ENCODE measurements at regions of chr7 and their contacts with region 1.

Region 1: DNA sequence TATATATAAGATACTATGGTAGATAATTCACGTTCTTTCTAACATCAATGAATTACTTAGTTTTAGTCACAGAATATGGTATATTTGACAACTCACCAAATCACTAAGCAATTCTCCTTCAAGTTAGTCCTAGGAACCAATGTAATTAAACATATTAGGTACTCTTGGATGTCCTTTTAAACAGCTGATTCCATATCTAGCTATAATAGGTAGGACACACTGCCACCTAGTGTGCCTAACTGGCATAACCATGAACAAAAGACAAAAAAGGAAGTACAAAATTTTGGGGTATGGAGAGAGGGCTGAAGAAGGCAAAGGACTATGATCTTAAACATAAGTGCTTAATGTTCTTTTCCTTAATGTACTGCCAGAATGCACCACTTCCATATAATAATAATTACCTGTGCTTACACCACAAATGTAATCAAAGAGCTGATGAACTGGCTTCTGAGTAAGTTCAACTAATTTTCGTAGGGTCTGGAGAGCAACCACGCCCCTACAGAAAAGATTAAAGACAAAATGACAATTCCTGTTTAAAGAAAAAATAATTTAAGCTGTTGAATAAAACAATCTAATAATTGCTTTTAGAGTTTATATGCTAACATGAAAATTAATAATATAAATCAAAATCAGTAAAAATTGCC is 28.7 kb downstream of the PNPLA8 start:
- DNase-seq: peak; percentile 40
- ATAC-seq: peak; percentile 63
- H3K4me3 ChIP-seq: no peak overlapping the region
- H3K27ac ChIP-seq: no peak overlapping the region
- H3K4me1 ChIP-seq: no peaks in the 10 kb centered on the region
- H3K27me3 ChIP-seq: no peaks in the 10 kb centered on the region
- CTCF ChIP-seq: peak; percentile 55 to 88 (median 66); a peak in 5 of 6 replicates
- POLR2A ChIP-seq: no peak
- RAD21 ChIP-seq: peak; percentile 76

Region 2: DNA sequence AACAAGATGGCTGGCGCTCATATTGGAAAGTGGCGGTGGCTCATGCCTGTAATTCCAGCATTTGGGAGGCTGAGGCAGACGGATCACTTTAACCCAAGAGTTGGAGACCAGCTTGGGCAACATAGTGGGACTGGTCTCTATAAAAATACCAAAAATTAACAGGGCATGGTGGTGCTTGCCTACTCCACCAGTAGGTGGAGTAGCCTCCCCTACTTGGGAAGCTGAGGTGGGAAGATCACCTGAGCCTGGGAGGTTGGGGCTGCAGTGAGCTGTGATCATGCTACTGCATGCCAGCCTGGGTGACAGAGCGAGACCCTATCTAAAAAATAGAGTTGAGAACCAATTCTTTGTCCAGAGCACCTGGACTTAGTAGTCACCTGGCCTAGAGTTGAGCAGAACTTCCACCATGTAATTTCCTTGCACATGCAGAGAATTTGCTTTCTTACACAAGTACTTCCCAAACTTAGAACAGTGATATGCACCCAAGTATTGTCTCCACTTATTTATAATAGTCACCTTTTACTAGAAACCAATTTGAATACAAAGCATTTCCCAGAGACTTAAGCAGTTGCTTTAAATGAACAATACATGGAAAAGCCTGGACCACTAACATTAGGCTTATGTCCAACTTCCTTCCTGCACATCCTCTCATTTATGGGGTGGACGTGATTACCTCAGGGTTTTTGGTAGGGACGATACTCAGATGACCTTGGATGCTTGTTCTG is 382.9 kb before region 1 on chr7:
- CTCF ChIA-PET with region 1: interaction called, 10 read pairs
- POLR2A ChIA-PET with region 1: no interaction called
- RAD21 ChIA-PET with region 1: no interaction called
- intact Hi-C with region 1: loop called (anchors 2 kb)
- DNase-seq: peak; percentile 39
- ATAC-seq: peak; percentile 91
- H3K4me3 ChIP-seq: no peak overlapping the region
- H3K27ac ChIP-seq: no peak overlapping the region
- H3K4me1 ChIP-seq: no peaks in the 10 kb centered on the region
- H3K27me3 ChIP-seq: no peaks in the 10 kb centered on the region
- CTCF ChIP-seq: peak; percentile 53 to 74 (median 71); a peak in 5 of 6 replicates
- POLR2A ChIP-seq: no peak
- RAD21 ChIP-seq: peak; percentile 71

Region 3: DNA sequence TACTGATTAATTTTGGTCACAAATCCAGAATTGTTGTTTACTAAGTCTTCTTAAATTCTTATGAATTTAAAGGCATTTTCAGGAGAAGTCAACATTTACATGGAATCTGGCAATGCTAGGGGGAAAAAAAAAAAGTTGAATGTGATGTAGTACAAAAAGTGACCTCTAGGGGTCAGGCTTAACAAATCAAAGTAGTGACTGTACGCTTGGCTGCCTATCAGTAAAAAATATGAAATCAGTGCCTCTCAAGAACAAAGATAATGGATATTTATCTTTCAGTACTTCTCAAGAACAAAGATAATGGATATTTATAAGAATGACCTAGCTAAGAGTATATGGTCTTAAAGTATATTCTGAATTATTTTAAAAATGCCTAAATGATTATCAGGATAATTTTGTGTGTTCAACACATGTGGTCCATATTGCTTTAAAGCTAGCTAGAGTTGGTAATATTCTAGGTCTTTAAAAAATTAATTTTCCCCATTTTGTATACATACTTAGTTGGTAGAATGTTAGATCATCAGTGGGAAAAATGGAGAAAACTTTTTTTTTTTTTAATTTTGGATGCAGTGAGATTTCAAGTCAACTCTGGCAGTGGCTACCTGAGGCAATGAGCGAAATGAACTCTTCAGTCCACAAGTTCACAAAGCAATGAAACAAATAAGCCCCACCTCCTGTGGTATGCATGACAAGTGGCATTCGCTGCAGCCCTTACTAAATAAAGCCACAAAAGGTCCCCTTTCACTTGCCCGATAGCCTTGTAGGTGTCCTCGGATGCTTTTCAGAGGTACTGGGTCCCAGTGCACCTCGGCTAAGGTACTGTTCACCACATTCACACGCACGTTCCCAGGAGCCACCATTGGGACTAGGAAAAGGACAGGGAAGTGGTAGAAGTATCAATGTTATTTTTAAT is 315.9 kb before region 1 on chr7:
- CTCF ChIA-PET with region 1: interaction called, 9 read pairs
- POLR2A ChIA-PET with region 1: no interaction called
- RAD21 ChIA-PET with region 1: no interaction called
- intact Hi-C with region 1: loop called (anchors 1 kb)
- DNase-seq: peak; percentile 51
- ATAC-seq: peak; percentile 67
- H3K4me3 ChIP-seq: no peak overlapping the region
- H3K27ac ChIP-seq: no peak overlapping the region
- H3K4me1 ChIP-seq: no peaks in the 10 kb centered on the region
- H3K27me3 ChIP-seq: no peaks in the 10 kb centered on the region
- CTCF ChIP-seq: peak; percentile 59 to 77 (median 65); a peak in 5 of 6 replicates
- POLR2A ChIP-seq: no peak
- RAD21 ChIP-seq: peak; percentile 80

Region 4: GRCh38 chr7:108415821-108416536 is 81.2 kb before region 1 on chr7:
- CTCF ChIA-PET with region 1: no interaction called
- POLR2A ChIA-PET with region 1: no interaction called
- RAD21 ChIA-PET with region 1: no interaction called
- intact Hi-C with region 1: no loop called
- DNase-seq: no peak
- ATAC-seq: no peak
- H3K4me3 ChIP-seq: no peak overlapping the region
- H3K27ac ChIP-seq: no peak overlapping the region
- H3K4me1 ChIP-seq: 0 out of 4 replicates have a peak, but pooled peaks cover 0 to 4% of the 10 kb centered on the region in 2 experiments
- H3K27me3 ChIP-seq: no peaks in the 10 kb centered on the region
- CTCF ChIP-seq: no peak
- POLR2A ChIP-seq: no peak
- RAD21 ChIP-seq: no peak

Region 5: DNA sequence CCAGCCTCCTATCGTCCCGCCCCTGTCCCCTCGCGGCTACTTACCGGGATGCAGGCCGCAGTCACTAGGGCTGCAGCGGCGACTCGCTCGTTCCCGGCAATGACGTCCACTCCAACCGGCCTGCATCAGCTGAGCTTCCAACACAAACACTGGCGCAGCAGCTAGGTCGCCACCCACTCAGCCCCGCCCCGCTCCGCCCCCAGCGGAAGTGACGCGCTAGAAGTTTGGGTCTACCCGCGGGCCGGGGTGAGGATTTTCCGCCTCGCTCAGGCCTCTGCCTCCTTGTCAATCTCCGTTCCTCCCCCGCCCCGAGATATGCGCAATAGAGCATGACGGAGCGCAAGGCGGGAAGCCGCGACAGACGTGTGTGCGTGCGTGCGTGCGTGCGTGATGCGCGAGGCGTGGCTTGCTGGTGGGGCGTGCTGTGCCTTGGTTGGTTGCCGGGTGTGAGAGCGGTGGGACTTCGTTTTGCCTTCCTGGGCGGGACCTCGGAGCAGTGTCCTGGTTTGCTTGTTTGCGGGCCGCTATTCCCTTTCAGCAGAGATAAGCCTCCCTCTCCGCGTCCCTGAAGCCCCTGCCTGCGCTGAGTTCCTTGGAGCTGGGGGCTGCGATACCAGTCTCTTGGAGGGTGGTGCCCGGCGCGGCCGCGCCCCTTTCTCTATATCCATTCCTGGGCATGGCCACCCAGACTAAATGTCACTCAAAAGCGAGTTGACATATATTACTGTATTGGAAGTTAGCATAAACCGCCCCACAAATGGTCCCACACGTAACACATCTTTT is 29.0 kb after region 1 on chr7 and contains the start of gene PNPLA8:
- CTCF ChIA-PET with region 1: interaction called, 10 read pairs
- POLR2A ChIA-PET with region 1: no interaction called
- RAD21 ChIA-PET with region 1: no interaction called
- intact Hi-C with region 1: no loop called
- DNase-seq: peak; percentile 98
- ATAC-seq: peak; percentile 93
- H3K4me3 ChIP-seq: peak within 1 kb of the TSS; percentile 73 to 78
- H3K27ac ChIP-seq: peak within 1 kb of the TSS; percentile 69
- H3K4me1 ChIP-seq: peaks cover 6 to 24% of the 10 kb centered on the region in 2 experiments; a peak in 3 of 4 replicates
- H3K27me3 ChIP-seq: no peaks in the 10 kb centered on the region
- CTCF ChIP-seq: no peak
- POLR2A ChIP-seq: peak; percentile 56
- RAD21 ChIP-seq: no peak
- total RNA-seq, gene PNPLA8: 12.9 TPM

Region 6: DNA sequence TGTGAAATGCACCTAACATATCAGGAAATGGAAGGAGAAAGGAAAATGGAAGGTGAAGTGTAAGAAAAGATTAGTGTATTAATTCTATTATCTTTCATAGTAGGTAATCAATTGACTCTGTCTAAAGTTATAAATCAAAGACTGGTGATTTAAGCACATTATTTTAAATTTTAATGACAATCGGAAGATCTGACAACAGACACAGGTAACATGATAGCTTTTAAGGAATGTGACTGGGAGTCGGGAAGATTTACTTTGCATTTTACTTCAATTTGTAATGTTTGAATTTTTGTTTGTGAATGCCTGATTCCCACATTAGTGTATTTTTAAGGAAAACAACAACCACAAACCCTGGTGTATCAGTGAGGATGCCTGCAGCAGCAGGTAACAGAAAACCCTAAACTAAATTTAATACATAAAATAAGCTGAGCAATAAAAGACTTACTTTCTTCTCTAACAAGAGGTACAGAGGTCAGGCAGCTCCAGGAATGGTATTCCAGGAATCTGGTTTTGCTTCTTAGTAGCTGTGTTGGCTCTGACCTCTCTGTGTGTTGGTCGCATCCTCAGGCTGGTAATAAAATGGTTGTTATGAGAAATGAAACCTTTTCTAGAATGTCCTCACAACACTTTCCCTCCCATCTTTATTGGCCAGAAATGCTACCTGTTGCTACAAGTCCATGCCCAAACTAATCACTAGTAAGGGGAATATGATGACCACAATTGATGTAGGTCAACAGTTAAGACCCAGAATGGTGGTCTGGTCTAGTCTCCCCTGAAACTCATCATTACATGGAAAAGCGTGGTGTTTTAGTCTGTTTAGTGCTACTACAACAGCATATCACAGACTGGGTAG is 84.7 kb after region 1 on chr7:
- CTCF ChIA-PET with region 1: no interaction called
- POLR2A ChIA-PET with region 1: no interaction called
- RAD21 ChIA-PET with region 1: no interaction called
- intact Hi-C with region 1: no loop called
- DNase-seq: no peak
- ATAC-seq: peak; percentile 60; the same call in 1 of the 2 replicates
- H3K4me3 ChIP-seq: no peak overlapping the region
- H3K27ac ChIP-seq: no peak overlapping the region
- H3K4me1 ChIP-seq: peaks cover 0 to 8% of the 10 kb centered on the region in 2 experiments; a peak in 1 of 4 replicates
- H3K27me3 ChIP-seq: no peaks in the 10 kb centered on the region
- CTCF ChIP-seq: no peak
- POLR2A ChIP-seq: no peak
- RAD21 ChIP-seq: no peak

Measured in HCT116 (cell line).